Head of caudate nucleus (tissue), 42 donors: ENCODE measurements at regions of chr9 and their contacts with region 1.

Region 1: DNA sequence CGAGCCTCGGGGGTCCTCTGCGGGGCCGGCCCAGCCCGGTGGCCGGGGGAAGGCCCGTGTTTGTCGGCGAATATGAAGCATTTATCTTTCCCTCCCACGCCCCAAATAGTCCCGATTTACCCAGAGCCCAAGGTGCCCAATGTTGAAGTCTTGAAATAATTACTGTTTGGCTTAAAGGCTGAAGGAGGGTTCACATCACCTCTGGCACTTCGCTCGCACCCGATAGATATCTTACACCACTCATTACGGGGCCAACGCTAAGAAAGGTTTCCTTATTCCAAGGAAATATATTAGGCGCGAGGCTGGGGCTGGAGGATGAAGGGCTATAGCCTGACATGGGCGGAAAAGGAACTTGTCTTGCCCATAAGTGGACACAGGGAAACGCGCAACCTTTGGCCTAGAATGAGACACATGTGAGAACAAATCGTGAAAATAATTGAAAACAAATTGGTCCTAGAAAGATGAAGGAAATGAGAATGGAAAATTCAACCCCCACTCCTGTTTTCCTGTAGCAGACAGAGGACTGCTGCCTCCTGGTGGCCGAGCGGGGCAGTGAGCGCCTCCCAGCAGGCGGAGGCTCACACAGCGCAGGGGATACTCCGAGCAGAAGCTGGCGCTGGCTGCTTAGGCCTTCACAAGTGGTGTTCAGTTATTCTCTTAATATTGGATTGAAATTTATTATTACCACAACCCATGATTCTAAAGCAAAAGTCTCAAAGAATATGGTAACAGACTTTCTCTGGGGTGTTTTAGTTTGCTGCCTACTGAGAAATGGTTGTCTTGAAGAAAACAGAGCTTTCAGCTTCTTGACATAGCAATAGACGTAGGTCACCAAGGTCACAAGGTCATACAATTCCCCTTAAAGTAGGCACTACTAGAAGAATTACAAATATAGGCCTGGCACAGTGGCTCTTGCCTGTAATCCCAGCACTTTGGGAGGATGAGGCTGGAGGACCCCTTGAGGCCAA is 7.9 kb downstream of the CCL21 start:
- DNase-seq: peak; percentile 76 to 94 (median 89)

Region 2: GRCh38 chr9:34651876-34652601 is 50.0 kb before region 1 on chr9 and contains the start of gene IL11RA:
- intact Hi-C with region 1: no loop called
- DNase-seq: peak; percentile 71 to 94 (median 85)

Region 3: GRCh38 chr9:34664281-34665066 is 37.6 kb before region 1 on chr9:
- intact Hi-C with region 1: loop called (anchors 5 kb)
- DNase-seq: peak; percentile 63 to 93 (median 81)